Ovary (tissue), 10 donors: ENCODE measurements at regions of chr2 and their contacts with region 1.

Region 1: GRCh38 chr2:44578421-44579135 is 216.8 kb downstream of the CAMKMT start:
- DNase-seq: no peak
- H3K4me3 ChIP-seq: no peak overlapping the region
- H3K27ac ChIP-seq: no peak overlapping the region
- H3K4me1 ChIP-seq: no peaks in the 10 kb centered on the region
- H3K27me3 ChIP-seq: no peaks in the 10 kb centered on the region
- CTCF ChIP-seq: no peak
- EP300 ChIP-seq: no peak
- POLR2A ChIP-seq: no peak

Region 2: DNA sequence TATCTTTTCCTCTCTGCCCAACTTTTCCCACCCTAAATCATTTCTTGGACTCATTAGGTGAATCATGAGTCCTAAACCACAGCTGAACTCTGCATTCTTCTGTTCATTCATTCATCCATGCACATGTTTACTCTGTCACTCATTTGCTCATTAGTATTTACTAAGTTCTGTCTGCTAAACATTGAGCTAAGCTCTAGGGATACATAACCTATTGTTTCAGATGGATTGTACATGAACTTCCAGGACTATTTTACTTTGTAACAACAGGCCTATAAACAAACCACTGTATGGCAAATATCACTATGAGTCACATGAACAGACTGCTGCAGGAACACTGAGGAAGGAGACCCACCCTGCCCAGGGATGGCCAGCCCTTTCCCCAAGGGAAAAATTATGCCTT is 819.4 kb before region 1 on chr2:
- intact Hi-C with region 1: no loop called
- DNase-seq: no peak
- H3K4me3 ChIP-seq: no peak overlapping the region
- H3K27ac ChIP-seq: no peak overlapping the region
- H3K4me1 ChIP-seq: no peaks in the 10 kb centered on the region
- H3K27me3 ChIP-seq: no peaks in the 10 kb centered on the region
- CTCF ChIP-seq: no peak
- EP300 ChIP-seq: no peak
- POLR2A ChIP-seq: no peak

Region 3: DNA sequence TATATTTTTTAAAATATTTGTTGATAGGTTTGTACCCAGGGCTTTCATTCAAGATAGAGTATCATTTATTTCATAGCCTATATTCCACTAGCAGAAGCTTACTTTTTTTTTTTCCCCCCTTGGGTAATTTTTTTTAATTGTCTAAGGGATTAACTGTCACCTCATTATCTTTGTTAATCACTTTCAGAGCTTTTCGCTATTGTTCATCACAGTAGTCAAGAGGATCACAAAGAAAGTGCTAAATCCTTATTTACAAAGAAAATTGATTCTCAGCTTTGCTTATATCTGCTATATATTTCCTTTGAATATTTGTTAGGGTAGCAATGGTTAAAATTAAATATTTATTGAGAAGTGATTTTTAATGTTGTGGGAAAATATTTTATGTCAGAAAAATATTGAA is 157.9 kb before region 1 on chr2:
- intact Hi-C with region 1: loop called in 1 of 4 experiments (anchors 10 kb)
- DNase-seq: no peak
- H3K4me3 ChIP-seq: no peak overlapping the region
- H3K27ac ChIP-seq: no peak overlapping the region
- H3K4me1 ChIP-seq: no peaks in the 10 kb centered on the region
- H3K27me3 ChIP-seq: no peaks in the 10 kb centered on the region
- CTCF ChIP-seq: no peak
- EP300 ChIP-seq: no peak
- POLR2A ChIP-seq: no peak